Activated T-helper 2 cell treated with anti-CD3 and anti-CD28 coated beads, Interferon-gamma antibody, Interleukin-2, Interleukin-4, amounts not matched to agents 10 μg/mL and 5 μg/mL and 100 μg/mL, durations not matched to agents 14 hours and 24 hours and 36 hours (primary cell): ENCODE measurements at regions of chr12 and their contacts with region 1.

Region 1: DNA sequence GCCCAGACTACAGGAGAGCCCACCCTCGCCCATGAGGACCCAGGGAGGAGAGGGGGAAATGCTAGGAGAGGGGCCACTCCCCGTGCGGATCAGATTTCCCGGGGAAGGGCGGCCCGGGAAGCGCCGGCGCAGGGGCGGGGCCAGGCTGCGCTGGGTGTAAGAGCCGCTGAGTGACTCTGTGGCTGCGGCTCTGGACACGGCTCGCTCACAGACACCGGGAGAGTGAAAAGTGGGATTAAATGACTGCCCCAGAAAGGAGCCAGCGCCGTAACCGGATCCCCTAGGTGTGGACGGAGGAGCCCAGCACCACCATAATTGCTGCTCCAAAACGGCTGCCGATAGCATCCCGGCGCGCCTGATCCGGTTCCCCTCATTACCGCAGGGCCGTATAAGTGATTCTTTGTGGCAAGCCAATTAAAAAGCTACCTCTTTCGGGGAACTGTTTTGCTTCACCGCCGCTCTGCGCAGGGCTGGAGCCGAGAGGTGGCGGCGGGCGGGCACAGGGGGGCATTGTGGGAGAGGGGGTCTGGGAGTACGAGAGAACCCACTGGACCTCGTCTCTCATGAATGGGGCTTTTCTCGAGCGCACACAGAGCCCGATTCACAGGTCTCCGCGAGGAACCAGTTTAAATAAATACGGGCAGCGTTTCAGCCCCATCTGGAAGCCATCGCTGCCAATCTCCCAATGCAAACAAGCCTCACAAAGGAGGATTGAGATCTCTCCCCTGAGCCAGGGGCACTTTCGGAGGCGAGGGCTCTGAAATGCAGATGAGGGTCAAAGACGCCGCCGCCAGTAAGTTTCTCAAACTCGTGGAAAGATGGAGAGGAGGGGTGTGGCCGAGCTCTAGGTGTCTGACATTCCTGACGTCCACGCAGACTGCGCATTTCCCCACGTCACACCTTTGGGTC is 2.5 kb downstream of the COL2A1 start:
- DNase-seq: no peak
- H3K4me3 Mint-ChIP-seq: peak overlapping the region; percentile 71
- H3K27ac Mint-ChIP-seq: no peak overlapping the region
- H3K4me1 Mint-ChIP-seq: peaks cover 25% of the 10 kb centered on the region
- H3K27me3 Mint-ChIP-seq: peaks cover 87% of the 10 kb centered on the region

Region 2: DNA sequence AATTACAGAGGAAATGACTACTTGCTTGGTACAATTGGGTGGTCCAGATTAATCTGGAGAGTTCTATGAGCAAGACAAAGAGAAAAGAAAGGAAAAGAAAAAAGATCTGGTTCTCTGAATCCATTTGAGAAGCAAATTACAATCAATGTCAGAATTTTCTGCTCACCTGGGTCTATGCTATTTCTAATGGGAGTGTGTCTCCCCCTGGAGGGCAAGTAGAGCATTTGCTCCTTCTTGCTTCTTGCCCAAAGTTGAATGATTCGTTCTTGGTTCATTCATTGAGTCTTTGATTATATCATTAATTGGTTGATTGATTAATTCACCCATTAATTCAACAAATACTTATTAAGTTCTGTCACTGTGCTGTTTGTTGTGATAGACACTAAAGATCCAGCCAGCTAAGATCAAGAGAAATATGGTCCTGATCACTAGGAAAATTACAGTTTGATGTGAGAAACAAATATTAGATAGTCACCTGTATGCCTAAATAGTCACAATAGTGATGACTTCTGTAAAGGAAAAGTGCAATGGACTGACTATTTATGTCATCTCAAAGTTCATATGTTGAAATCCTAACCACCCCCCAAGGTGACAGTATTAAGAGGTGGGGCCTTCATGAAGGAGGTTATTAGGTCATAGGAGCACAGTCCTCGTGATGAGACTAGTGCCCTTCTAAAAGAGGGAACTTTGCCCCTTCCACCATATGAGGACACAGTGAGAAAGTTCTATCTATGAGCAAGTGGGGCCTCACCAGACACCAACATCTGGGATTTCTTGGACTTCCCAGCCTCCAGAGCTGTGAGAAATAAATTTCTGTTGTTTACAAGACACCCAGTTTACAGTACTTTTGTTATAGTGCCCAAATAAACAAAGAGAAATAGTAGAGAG is 163.6 kb after region 1 on chr12:
- intact Hi-C with region 1: loop called (anchors 1 kb)
- DNase-seq: no peak
- H3K4me3 Mint-ChIP-seq: no peak overlapping the region
- H3K27ac Mint-ChIP-seq: no peak overlapping the region
- H3K4me1 Mint-ChIP-seq: peaks cover 2% of the 10 kb centered on the region
- H3K27me3 Mint-ChIP-seq: peaks cover 16% of the 10 kb centered on the region

Region 3: DNA sequence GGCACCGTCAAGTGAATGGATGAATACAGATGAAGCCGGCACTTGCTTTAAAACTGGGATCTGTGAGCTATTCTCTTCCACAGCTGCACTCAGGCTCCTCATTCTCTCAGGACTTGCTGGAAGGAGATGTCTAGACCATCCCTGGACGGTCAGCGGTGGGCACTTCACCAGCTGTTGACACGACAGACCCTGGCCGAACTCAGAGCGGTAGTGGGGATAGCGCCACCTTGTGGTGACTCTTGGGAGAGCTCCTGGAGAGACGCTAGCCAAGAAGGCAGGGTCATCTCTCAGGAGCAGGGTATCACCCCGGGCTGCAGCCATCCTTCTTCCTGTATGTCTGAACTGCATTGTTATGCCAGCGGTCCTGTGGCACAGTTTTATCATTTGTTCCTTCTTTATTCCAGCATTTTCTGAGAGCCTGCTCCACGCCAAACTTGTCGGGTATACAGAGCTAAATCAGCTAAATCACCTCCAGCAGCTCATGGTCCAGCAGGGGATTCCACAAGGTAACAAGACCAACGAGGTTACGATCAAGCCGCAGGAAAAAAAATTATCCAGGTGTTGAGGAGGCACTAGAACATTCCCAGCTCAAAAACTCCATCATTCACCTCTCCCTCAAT is 986.4 kb after region 1 on chr12:
- intact Hi-C with region 1: loop called (anchors 10 kb)
- DNase-seq: peak; percentile 62
- H3K4me3 Mint-ChIP-seq: no peak overlapping the region
- H3K27ac Mint-ChIP-seq: no peak overlapping the region
- H3K4me1 Mint-ChIP-seq: peaks cover 6% of the 10 kb centered on the region
- H3K27me3 Mint-ChIP-seq: peaks cover 68% of the 10 kb centered on the region